GM10248 (cell line): ENCODE measurements at regions of chr6 and their contacts with region 1.

Region 1: GRCh38 chr6:31163922-31164321 is 5.5 kb downstream of the TCF19 start:
- DNase-seq: no peak
- CTCF ChIP-seq: no peak

Region 2: DNA sequence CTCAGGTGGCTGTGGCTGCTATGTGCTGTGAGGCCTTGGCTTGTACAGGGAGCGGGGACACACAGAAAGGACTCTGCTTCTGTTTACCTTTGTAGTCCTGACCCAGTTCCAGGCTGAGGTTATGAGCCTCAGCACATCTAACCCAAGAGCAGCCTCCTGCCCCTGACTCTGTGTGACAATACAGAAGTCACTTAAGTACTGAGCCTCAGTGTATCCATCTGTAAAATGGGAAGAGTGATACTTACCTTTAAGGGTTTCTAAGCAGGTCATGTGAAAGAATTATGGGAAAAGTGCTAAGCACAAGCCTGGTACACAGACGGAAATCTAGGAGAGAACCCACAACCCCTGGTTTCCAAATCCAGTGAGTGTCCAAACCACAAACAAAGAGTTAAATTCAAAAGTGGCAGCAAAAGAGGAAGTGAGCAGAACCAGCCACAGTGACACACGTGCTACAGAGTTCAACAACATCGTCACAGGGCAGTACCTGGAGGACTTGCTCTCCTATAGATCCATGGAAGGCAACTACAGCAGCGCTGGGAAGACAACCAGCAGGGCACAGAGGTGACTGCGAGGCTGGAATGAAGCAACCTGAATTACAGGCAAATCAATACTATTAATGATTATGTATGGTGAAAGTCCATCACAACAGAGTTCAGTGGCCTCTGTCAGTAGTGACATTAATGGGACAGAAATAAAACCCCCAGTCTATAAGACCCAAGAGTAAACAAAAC is 963.2 kb before region 1 on chr6:
- CTCF ChIA-PET with region 1: no interaction called
- POLR2A ChIA-PET with region 1: no interaction called
- DNase-seq: peak; percentile 69
- CTCF ChIP-seq: no peak

Region 3: GRCh38 chr6:31143148-31143547 is 20.8 kb before region 1 on chr6:
- CTCF ChIA-PET with region 1: interaction called, 21 read pairs
- POLR2A ChIA-PET with region 1: interaction called, 4 read pairs
- DNase-seq: no peak
- CTCF ChIP-seq: no peak